AG04450 (cell line): ENCODE measurements at regions of chr4 and their contacts with region 1.

Region 1: DNA sequence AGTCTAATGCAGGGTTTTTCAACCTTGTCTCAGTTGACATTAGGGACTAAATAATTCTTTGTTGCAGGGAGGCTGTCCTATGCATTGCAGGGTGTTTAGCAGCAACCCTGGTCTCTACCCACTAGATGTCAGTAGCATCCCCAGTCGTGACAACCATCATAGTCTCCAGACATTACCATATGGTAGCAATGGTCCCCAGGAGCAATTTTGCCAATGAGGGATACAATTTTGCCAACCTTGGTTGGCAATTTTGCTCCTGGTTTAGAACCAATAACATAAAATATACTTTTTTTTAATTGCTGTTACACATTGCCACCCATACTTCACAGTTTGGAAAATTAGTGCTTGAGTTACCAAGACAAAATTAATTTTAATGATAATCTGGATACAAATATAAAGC is 6.0 kb downstream of the EREG start:
- DNase-seq: no peak
- H3K4me3 ChIP-seq: no peak overlapping the region
- H3K27ac ChIP-seq: no peak overlapping the region
- H3K27me3 ChIP-seq: no peaks in the 10 kb centered on the region
- CTCF ChIP-seq: peak; percentile 89

Region 2: GRCh38 chr4:74320559-74321118 is 50.3 kb before region 1 on chr4:
- CTCF ChIA-PET with region 1: interaction called, 45 read pairs
- POLR2A ChIA-PET with region 1: no interaction called
- DNase-seq: peak; percentile 46
- H3K4me3 ChIP-seq: no peak overlapping the region
- H3K27ac ChIP-seq: no peak overlapping the region
- H3K27me3 ChIP-seq: no peaks in the 10 kb centered on the region
- CTCF ChIP-seq: peak; percentile 69

Region 3: GRCh38 chr4:74353858-74354257 is 17.1 kb before region 1 on chr4:
- CTCF ChIA-PET with region 1: interaction called, 12 read pairs
- POLR2A ChIA-PET with region 1: no interaction called
- DNase-seq: no peak
- H3K4me3 ChIP-seq: no peak overlapping the region
- H3K27ac ChIP-seq: no peak overlapping the region
- H3K27me3 ChIP-seq: no peaks in the 10 kb centered on the region
- CTCF ChIP-seq: no peak

Region 4: DNA sequence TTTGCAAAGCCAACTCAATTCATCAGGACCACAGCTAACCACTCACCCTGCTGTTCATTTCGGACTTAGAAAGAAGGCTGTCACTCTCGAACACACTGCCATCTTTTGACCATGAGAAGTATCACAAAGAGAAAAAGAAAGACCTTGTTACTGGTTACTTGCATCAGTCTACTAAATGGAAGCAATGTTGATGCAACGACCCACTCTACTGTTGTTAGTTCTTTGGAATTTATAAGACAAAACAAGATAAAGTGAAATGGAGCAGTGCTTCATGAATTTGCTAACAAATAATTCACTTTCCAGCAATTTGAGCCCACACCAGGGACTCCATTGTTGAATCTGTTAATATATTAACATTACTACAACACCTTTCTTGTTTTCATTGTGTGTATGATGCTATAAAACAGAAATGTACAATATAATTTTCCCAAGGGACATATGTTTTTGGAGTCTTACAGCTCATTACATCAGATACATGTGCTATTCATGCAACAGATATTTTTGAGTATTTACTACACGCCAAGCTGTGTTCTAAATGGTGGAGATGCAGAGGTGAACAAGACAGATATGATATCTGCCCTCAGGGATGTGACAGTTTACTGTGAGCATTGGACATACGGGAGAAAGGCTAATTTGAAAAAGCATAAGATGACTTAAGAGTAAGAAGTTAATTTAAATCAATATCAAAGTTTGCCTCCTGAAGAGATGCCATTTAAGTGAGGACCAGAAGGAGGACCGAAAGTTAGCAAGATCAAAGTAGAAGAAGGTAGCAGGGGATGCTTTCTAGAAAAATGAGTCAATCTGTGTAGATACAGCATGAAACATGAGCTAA is 161.3 kb after region 1 on chr4:
- CTCF ChIA-PET with region 1: interaction called, 55 read pairs
- POLR2A ChIA-PET with region 1: no interaction called
- DNase-seq: peak; percentile 59
- H3K4me3 ChIP-seq: no peak overlapping the region
- H3K27ac ChIP-seq: no peak overlapping the region
- H3K27me3 ChIP-seq: no peaks in the 10 kb centered on the region
- CTCF ChIP-seq: peak; percentile 64

Region 5: GRCh38 chr4:74623041-74623440 is 252.1 kb after region 1 on chr4:
- CTCF ChIA-PET with region 1: interaction called, 23 read pairs
- POLR2A ChIA-PET with region 1: no interaction called
- DNase-seq: no peak
- H3K4me3 ChIP-seq: no peak overlapping the region
- H3K27ac ChIP-seq: no peak overlapping the region
- H3K27me3 ChIP-seq: no peaks in the 10 kb centered on the region
- CTCF ChIP-seq: peak; percentile 30; the same call in 1 of the 2 replicates

Region 6: DNA sequence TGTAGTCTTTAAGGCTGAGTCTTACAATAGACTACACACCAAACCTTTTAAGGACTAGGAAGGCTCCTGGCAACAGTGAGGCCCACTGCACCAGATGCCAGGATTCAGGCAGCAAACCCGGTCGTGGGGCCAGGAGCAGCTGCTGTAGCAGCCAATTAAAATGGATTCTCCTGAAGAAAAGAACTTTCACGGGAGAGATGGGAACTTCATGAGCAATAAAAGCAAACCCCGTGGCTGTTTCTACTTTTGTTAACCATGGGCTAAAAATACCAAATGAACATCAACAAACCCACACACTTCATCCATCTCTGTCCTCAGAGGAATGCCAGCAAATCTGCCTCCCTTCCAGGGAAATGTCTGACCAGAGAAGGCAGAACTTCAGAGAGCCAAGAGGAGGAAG is 322.1 kb after region 1 on chr4:
- CTCF ChIA-PET with region 1: no interaction called
- POLR2A ChIA-PET with region 1: no interaction called
- DNase-seq: peak; percentile 11
- H3K4me3 ChIP-seq: no peak overlapping the region
- H3K27ac ChIP-seq: peak overlapping the region; percentile 23
- H3K27me3 ChIP-seq: no peaks in the 10 kb centered on the region
- CTCF ChIP-seq: no peak